ENCODE measurements at regions of chr5 and their contacts with region 1.

Region 1: DNA sequence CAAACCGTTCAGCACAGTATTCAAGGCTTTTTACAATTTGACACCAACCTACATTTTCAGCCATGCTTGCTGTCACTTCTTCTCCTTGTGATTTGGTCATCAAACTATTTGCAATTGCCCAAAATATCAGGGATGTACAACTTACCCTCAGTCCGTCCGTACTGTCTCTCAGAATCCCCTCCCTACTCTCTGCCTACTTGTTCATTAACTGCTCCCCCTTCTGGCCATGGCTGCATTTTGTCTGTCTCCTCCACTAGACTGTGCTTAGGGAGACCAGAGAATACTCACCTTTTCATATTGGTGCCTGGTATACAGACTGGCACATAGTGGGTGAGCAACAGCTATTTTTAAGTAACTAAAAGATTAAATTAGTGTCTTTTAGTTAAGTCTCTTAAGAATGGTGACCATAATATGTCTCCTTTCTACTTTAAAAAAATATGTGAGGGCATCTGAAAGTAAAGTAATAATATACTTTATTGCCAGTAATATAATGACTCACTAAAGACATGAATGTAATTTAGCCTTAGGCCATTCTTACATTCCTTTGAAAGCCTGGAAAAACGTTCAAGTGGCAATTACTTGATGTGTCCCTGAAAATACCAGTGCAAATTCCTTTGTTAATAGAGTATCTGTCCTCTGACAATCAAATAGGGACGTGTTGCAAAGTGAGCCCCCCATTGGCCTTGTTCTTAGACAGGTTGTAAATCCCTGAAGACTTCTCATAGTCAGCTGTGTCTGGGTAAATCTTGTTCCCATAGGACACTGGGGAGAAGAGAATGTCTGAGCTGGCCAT is 27.8 kb downstream of the PRLR start:
- DNase-seq: peak in 4 of 9 donors; percentile 2 to 4 (median 2)
- ATAC-seq: peak; percentile 40
- H3K4me3 ChIP-seq: no peak overlapping the region
- H3K4me3 Mint-ChIP-seq: no peak overlapping the region
- H3K27ac ChIP-seq: no peak overlapping the region
- H3K27ac Mint-ChIP-seq: no peak overlapping the region
- H3K4me1 ChIP-seq: no peaks in the 10 kb centered on the region
- H3K4me1 Mint-ChIP-seq: peaks cover 0 to 1% (median 0%) of the 10 kb centered on the region in 7 donors
- H3K27me3 ChIP-seq: no peaks in the 10 kb centered on the region
- H3K27me3 Mint-ChIP-seq: peaks cover 20 to 43% (median 30%) of the 10 kb centered on the region in 5 donors

Region 2: GRCh38 chr5:35089334-35090314 is 112.9 kb before region 1 on chr5:
- CTCF ChIA-PET with region 1: no interaction called
- POLR2A ChIA-PET with region 1: no interaction called
- intact Hi-C with region 1: loop called in 1 of 2 experiments (anchors 1 kb)
- DNase-seq: peak; percentile 15 to 55 (median 37)
- ATAC-seq: peak; percentile 56
- H3K4me3 ChIP-seq: no peak overlapping the region
- H3K4me3 Mint-ChIP-seq: no peak overlapping the region
- H3K27ac ChIP-seq: no peak overlapping the region
- H3K27ac Mint-ChIP-seq: no peak overlapping the region
- H3K4me1 ChIP-seq: no peaks in the 10 kb centered on the region
- H3K4me1 Mint-ChIP-seq: peaks cover 0 to 3% (median 0%) of the 10 kb centered on the region in 7 donors
- H3K27me3 ChIP-seq: no peaks in the 10 kb centered on the region
- H3K27me3 Mint-ChIP-seq: peaks cover 0 to 7% (median 6%) of the 10 kb centered on the region in 5 donors

Region 3: DNA sequence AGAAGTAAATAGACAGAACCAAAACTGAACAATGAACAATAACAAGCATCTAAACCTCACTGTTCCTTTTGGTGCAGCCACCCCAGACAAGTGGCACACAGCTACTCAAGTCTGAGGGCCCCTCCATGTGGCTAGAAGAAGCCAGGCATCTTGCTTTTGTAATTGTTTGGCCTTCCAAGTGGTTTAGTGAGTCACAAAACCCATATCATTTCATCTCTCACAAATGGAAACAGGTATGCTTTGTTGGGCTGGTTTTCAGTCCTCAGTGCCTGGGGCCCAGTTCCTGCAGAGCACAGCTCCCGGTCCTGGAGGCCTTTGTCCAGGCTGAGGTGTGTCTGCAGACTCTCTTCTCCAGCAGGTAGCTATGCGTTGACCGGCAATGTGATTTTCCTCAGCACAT is 11.1 kb after region 1 on chr5:
- CTCF ChIA-PET with region 1: no interaction called
- POLR2A ChIA-PET with region 1: no interaction called
- intact Hi-C with region 1: no loop called
- DNase-seq: no peak
- ATAC-seq: no peak
- H3K4me3 ChIP-seq: no peak overlapping the region
- H3K4me3 Mint-ChIP-seq: no peak overlapping the region
- H3K27ac ChIP-seq: no peak overlapping the region
- H3K27ac Mint-ChIP-seq: no peak overlapping the region
- H3K4me1 ChIP-seq: no peaks in the 10 kb centered on the region
- H3K4me1 Mint-ChIP-seq: no peaks in the 10 kb centered on the region
- H3K27me3 ChIP-seq: no peaks in the 10 kb centered on the region
- H3K27me3 Mint-ChIP-seq: peaks cover 3 to 15% (median 5%) of the 10 kb centered on the region in 5 donors